OCI-LY7 (cell line): ENCODE measurements at regions of chr11 and their contacts with region 1.

Region 1: GRCh38 chr11:125649465-125650166 is 24.7 kb downstream of the CHEK1 start:
- DNase-seq: no peak
- H3K4me3 ChIP-seq: no peak overlapping the region
- H3K27ac ChIP-seq: no peak overlapping the region
- H3K4me1 ChIP-seq: no peaks in the 10 kb centered on the region
- CTCF ChIP-seq: no peak

Region 2: DNA sequence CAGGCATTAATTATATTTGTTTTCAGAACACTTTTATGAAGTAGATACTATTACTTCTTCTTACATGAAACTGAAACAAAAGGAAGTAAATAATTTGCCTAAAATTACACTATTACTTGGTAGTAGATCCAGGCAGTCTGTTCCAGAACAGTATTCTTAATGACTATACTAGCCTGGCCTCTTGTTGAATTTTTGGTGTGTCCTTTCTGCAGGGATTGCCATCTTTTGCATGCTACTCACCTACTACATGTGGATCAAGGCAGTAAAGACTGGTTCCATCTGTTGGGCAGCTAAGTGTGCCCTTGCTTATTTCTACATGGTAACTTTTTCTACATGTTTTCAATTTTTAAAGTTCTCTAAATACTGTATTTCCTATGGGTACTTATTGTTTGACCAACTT is 44.2 kb before region 1 on chr11:
- CTCF ChIA-PET with region 1: no interaction called
- POLR2A ChIA-PET with region 1: no interaction called
- intact Hi-C with region 1: loop called (anchors 5 kb)
- DNase-seq: no peak
- H3K4me3 ChIP-seq: no peak overlapping the region
- H3K27ac ChIP-seq: no peak overlapping the region
- H3K4me1 ChIP-seq: no peaks in the 10 kb centered on the region
- CTCF ChIP-seq: no peak

Region 3: DNA sequence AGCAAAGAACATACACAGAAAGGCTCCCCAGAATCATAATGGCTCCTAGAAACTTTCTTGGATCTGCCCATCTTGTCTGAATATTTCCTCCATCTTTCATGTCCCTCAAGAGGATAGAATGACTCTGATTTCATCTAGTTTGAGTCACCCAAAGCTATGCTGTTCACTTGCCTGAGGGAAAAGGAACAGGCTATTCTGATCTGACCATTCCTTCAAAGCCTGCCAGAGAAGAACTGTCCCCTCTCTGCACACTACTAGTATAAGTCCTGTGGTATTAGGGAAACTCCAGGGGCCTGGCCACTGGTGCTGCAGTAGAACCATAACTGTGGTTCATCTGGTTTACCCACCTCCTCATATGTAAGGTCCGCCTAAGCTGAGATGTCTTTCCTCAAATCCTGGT is 94.1 kb after region 1 on chr11:
- CTCF ChIA-PET with region 1: no interaction called
- POLR2A ChIA-PET with region 1: no interaction called
- intact Hi-C with region 1: no loop called
- DNase-seq: no peak
- H3K4me3 ChIP-seq: no peak overlapping the region
- H3K27ac ChIP-seq: no peak overlapping the region
- H3K4me1 ChIP-seq: no peaks in the 10 kb centered on the region
- CTCF ChIP-seq: no peak